GM12878 (cell line): ENCODE measurements at regions of chr1 and their contacts with region 1.

Region 1: GRCh38 chr1:93061895-93062792 is 16.9 kb upstream of the MTF2 start:
- DNase-seq: no peak
- ATAC-seq: peak; percentile 99
- H3K4me3 ChIP-seq: no peak overlapping the region
- H3K27ac ChIP-seq: no peak overlapping the region
- H3K4me1 ChIP-seq: no peaks in the 10 kb centered on the region
- H3K27me3 ChIP-seq: no peaks in the 10 kb centered on the region; a peak in 1 of 4 replicates
- CTCF ChIP-seq: peak; percentile 67 to 83 (median 72)
- EP300 ChIP-seq: no peak
- POLR2A ChIP-seq: no peak
- RAD21 ChIP-seq: peak; percentile 90

Region 2: DNA sequence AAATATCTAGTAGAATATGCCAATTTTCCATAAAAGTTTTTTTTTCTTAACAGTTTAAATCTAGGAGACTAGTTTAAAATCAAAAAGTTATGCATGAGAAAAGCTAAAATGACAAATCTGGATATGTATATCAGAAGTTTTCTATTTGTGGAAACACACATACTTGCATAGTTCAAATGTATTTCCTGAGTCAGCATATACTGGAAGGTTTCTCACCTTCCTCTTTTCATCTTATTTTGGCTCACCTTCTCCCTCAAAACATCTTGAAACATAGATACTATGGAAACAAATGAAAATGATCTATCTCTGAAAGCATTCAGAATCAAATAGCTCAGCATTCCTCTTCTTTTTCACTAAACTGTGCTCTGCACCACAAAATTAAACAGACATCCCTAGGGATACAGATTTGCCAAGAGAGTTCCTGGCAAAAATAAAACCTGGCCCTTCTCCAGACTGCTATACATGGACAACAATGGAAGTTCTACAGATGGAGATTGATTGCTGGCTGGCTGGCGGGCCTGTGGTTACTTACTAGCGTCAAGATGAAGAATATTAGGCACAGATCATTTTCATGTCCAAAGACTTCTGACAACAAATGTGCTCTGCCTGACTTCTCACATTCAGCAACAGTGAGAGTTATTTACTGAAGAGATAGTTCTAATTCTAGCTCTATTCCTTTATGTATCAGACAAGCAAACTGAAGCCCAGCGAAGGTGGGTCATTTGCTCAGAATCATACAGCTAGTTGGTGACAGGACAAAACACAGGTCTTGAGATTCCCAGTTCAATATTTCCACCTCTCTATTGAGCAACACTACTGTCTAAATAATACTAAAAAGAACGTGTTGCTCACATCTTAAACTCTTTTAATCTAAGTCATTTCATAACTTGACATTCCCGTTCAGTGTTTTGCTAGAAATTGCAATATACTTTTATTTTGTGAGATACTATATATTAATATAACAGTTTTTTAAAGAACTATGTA is 127.5 kb before region 1 on chr1:
- CTCF ChIA-PET with region 1: no interaction called
- POLR2A ChIA-PET with region 1: no interaction called
- RAD21 ChIA-PET with region 1: no interaction called
- SMC1A ChIA-PET with region 1: no interaction called
- in situ Hi-C with region 1: no loop called
- intact Hi-C with region 1: no loop called
- DNase-seq: no peak
- ATAC-seq: 0 out of 3 replicates have a peak, but pooled peaks have one; percentile 21
- H3K4me3 ChIP-seq: no peak overlapping the region
- H3K27ac ChIP-seq: peak overlapping the region; percentile 0
- H3K4me1 ChIP-seq: peaks cover 37% of the 10 kb centered on the region
- H3K27me3 ChIP-seq: no peaks in the 10 kb centered on the region
- CTCF ChIP-seq: no peak
- EP300 ChIP-seq: no peak
- POLR2A ChIP-seq: no peak
- RAD21 ChIP-seq: no peak

Region 3: DNA sequence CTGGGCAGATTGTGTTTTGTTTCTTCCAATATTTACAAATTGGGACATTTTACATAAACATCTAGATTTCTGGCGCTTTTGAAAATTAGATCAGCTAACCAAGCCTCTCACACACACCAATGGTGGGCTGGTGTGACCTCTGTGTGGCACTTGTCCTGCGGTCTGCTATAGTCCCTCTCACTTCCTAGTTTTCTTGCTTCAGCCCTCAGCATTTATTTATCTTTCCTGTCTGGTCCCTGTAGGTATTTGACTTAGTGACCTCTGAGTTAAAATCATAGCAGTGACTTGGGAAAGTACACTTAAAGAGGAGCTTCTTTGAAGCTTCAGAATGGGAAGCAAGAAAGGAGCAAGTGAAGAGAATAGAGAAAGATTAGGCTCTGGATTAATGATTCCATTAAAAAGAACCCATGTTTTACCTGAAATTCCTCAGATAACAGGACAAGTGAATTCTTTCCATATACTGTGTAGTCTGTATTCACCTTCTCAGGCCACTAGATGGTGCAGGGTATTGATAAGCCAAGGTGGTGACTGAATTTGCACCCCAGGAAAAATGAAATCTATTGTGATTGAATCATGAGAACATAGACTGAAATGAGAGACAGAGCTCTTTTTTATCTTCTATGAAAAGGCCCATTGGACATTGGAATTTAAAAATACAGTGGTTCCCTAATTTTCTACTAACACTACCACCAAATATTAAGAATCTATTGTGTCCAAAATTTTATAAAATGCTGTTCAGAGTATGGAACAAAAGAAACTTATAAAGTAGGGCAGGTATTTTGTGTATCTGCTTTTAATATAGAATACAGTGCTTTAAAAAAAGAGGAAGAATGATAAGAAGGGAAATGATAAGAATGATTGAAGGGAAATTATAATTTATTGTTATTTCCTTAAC is 93.8 kb before region 1 on chr1:
- CTCF ChIA-PET with region 1: interaction called, 22 read pairs
- POLR2A ChIA-PET with region 1: no interaction called
- RAD21 ChIA-PET with region 1: interaction called, 11 read pairs
- SMC1A ChIA-PET with region 1: interaction called, 13 read pairs
- in situ Hi-C with region 1: no loop called
- intact Hi-C with region 1: loop called (anchors 1 kb)
- DNase-seq: no peak
- ATAC-seq: peak; percentile 84
- H3K4me3 ChIP-seq: no peak overlapping the region
- H3K27ac ChIP-seq: no peak overlapping the region
- H3K4me1 ChIP-seq: peaks cover 30% of the 10 kb centered on the region
- H3K27me3 ChIP-seq: no peaks in the 10 kb centered on the region
- CTCF ChIP-seq: peak; percentile 72 to 81 (median 74)
- EP300 ChIP-seq: no peak
- POLR2A ChIP-seq: no peak
- RAD21 ChIP-seq: peak; percentile 89

Region 4: DNA sequence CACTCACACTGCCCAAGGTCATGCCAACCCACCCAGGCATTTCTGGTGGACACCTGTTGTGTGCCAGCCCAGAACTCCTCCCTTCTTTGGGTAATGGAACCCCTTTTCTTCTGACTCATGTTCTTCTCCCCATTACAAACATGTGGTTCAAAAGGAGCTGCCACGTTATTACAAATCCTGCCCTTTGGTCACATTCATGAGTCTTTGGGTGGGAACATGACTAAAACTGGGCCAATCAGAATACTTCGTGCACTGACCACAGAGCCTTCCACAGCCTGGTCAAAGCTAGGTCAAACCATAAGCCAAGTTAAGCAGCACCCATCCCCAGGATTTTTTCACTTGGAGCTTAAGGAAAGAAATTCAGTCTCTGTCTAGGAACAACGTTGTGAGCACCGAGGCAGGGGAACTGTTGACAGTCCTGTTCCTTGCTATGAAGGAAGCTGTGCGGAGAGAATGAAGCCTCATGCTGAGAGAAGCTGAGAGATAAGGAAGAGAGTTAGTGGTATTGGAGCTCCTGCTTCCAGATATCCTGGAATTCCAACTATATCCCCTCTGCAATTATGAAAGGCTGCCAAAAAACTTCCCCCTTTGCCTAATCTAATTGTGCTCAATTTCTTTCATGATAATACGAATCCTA is 54.1 kb before region 1 on chr1:
- CTCF ChIA-PET with region 1: interaction called, 445 read pairs
- POLR2A ChIA-PET with region 1: no interaction called
- RAD21 ChIA-PET with region 1: no interaction called
- SMC1A ChIA-PET with region 1: interaction called, 11 read pairs
- in situ Hi-C with region 1: no loop called
- intact Hi-C with region 1: no loop called
- DNase-seq: no peak
- ATAC-seq: no peak
- H3K4me3 ChIP-seq: no peak overlapping the region
- H3K27ac ChIP-seq: no peak overlapping the region
- H3K4me1 ChIP-seq: peaks cover under 1% of the 10 kb centered on the region; the same call in 1 of the 2 replicates
- H3K27me3 ChIP-seq: no peaks in the 10 kb centered on the region
- CTCF ChIP-seq: no peak
- EP300 ChIP-seq: no peak
- POLR2A ChIP-seq: no peak
- RAD21 ChIP-seq: no peak

Region 5: DNA sequence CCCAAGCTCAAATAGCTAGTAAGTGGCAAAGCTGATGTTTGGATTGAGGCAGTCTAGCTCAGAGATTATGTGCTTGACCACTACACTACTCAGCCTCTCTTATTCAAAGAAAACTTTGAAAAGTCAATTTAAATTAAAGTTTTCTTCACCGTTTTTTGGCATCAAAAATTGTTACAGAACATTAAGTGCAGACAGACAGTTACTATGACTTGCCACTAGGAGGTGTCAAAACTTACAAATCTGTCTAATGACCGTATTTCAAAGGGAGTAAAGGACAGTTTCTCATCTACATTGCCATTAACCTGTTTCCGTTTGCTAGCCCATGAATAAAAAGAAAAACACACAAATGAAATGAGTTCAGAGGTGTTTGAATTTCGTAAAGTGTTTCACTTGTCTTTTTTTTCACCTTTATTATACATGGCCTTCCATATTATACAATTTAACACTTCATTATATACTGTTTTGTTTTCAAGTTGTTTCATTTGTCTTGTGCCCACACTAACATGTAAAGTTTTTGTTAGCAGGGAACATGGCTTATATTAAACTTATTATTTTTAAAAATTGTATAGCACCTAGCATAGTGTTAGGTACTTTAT is 40.5 kb before region 1 on chr1:
- CTCF ChIA-PET with region 1: interaction called, 445 read pairs
- POLR2A ChIA-PET with region 1: interaction called, 5 read pairs
- RAD21 ChIA-PET with region 1: interaction called, 36 read pairs
- SMC1A ChIA-PET with region 1: interaction called, 57 read pairs
- in situ Hi-C with region 1: loop called (anchors 5 kb)
- intact Hi-C with region 1: loop called (anchors 1 kb)
- DNase-seq: no peak
- ATAC-seq: peak; percentile 94
- H3K4me3 ChIP-seq: no peak overlapping the region
- H3K27ac ChIP-seq: no peak overlapping the region
- H3K4me1 ChIP-seq: no peaks in the 10 kb centered on the region; the same call in 1 of the 2 replicates
- H3K27me3 ChIP-seq: no peaks in the 10 kb centered on the region; a peak in 1 of 4 replicates
- CTCF ChIP-seq: peak; percentile 70 to 78 (median 71)
- EP300 ChIP-seq: no peak
- POLR2A ChIP-seq: no peak
- RAD21 ChIP-seq: peak; percentile 93

Region 6: GRCh38 chr1:93042187-93043056 is 19.7 kb before region 1 on chr1:
- CTCF ChIA-PET with region 1: interaction called, 16 read pairs
- POLR2A ChIA-PET with region 1: no interaction called
- RAD21 ChIA-PET with region 1: no interaction called
- SMC1A ChIA-PET with region 1: interaction called, 14 read pairs
- in situ Hi-C with region 1: no loop called
- intact Hi-C with region 1: no loop called
- DNase-seq: peak; percentile 55
- ATAC-seq: peak; percentile 97
- H3K4me3 ChIP-seq: peak overlapping the region; percentile 27; the same call in 1 of the 2 replicates
- H3K27ac ChIP-seq: peak overlapping the region; percentile 73
- H3K4me1 ChIP-seq: peaks cover 11% of the 10 kb centered on the region
- H3K27me3 ChIP-seq: no peaks in the 10 kb centered on the region
- CTCF ChIP-seq: no peak
- EP300 ChIP-seq: no peak
- POLR2A ChIP-seq: 0 out of 2 replicates have a peak, but pooled peaks have one; percentile 23
- RAD21 ChIP-seq: no peak

Region 7: GRCh38 chr1:93172778-93173177 is 110.6 kb after region 1 on chr1:
- CTCF ChIA-PET with region 1: no interaction called
- POLR2A ChIA-PET with region 1: no interaction called
- RAD21 ChIA-PET with region 1: no interaction called
- SMC1A ChIA-PET with region 1: no interaction called
- in situ Hi-C with region 1: no loop called
- intact Hi-C with region 1: no loop called
- DNase-seq: no peak
- ATAC-seq: no peak
- H3K4me3 ChIP-seq: 0 out of 2 replicates have a peak overlapping the region, but pooled peaks have one; percentile 12
- H3K27ac ChIP-seq: no peak overlapping the region
- H3K4me1 ChIP-seq: peaks cover 5% of the 10 kb centered on the region; the same call in 1 of the 2 replicates
- H3K27me3 ChIP-seq: no peaks in the 10 kb centered on the region
- CTCF ChIP-seq: no peak
- EP300 ChIP-seq: no peak
- POLR2A ChIP-seq: no peak
- RAD21 ChIP-seq: no peak

Region 8: DNA sequence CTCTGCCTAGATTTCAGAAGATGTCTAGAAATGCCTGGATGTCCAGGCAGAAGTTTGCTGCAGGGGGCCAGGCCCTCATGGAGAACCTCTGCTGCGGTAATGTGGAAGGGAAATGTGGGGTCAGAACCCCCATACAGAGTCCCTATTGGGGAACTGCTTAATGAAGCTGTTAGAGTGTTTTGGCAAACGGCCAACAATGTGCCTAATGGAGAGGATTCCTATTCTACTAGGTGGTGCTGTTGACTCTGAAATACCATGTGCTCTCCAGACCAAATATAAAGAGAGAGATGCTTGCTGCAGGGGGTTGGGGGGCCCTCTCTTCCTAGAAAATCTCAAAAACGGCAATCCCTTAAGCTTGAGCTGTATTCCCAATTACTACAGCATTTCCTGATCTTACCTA is 226.4 kb after region 1 on chr1:
- CTCF ChIA-PET with region 1: no interaction called
- POLR2A ChIA-PET with region 1: no interaction called
- RAD21 ChIA-PET with region 1: no interaction called
- SMC1A ChIA-PET with region 1: no interaction called
- in situ Hi-C with region 1: no loop called
- intact Hi-C with region 1: no loop called
- DNase-seq: no peak
- ATAC-seq: no peak
- H3K4me3 ChIP-seq: no peak overlapping the region
- H3K27ac ChIP-seq: no peak overlapping the region
- H3K4me1 ChIP-seq: no peaks in the 10 kb centered on the region
- H3K27me3 ChIP-seq: no peaks in the 10 kb centered on the region
- CTCF ChIP-seq: no peak
- EP300 ChIP-seq: no peak
- POLR2A ChIP-seq: no peak
- RAD21 ChIP-seq: no peak